T-cell (primary cell): ENCODE measurements at regions of chr5 and their contacts with region 1.

Region 1: GRCh38 chr5:98872674-98873073 is 56.1 kb downstream of the CHD1 start:
- DNase-seq: no peak
- ATAC-seq: no peak
- H3K4me3 ChIP-seq: no peak overlapping the region
- H3K4me3 Mint-ChIP-seq: no peak overlapping the region
- H3K27ac ChIP-seq: no peak overlapping the region
- H3K27ac Mint-ChIP-seq: no peak overlapping the region
- H3K4me1 ChIP-seq: no peaks in the 10 kb centered on the region
- H3K4me1 Mint-ChIP-seq: peaks cover under 1 to 8% (median 5%) of the 10 kb centered on the region in 3 donors
- H3K27me3 ChIP-seq: no peaks in the 10 kb centered on the region
- H3K27me3 Mint-ChIP-seq: no peaks in the 10 kb centered on the region

Region 2: DNA sequence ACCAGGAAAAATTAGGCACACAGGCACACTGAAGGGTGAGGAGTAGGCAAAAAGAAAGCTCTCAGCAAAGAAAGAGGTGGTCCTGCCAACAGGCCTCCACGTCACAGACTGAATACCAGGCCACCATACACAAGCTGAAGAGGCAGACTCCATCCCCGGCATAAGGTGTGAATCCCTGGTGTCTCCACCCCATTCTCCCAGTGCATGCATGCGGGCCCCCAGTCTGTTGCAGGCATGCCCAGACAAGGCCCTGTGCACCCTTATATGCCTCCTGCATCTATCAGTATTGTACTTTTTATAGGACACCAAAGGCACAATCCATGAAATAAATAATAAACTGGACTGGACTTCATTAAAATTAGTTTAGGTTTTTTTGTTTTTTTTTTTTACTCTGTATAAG is 26.2 kb before region 1 on chr5:
- CTCF ChIA-PET with region 1: no interaction called
- POLR2A ChIA-PET with region 1: interaction called in 1 of 2 experiments, 13 read pairs
- DNase-seq: no peak
- ATAC-seq: no peak
- H3K4me3 ChIP-seq: no peak overlapping the region
- H3K4me3 Mint-ChIP-seq: no peak overlapping the region
- H3K27ac ChIP-seq: no peak overlapping the region
- H3K27ac Mint-ChIP-seq: no peak overlapping the region
- H3K4me1 ChIP-seq: no peaks in the 10 kb centered on the region
- H3K4me1 Mint-ChIP-seq: no peaks in the 10 kb centered on the region
- H3K27me3 ChIP-seq: no peaks in the 10 kb centered on the region
- H3K27me3 Mint-ChIP-seq: no peaks in the 10 kb centered on the region

Region 3: GRCh38 chr5:99122976-99123375 is 250.3 kb after region 1 on chr5:
- CTCF ChIA-PET with region 1: no interaction called
- POLR2A ChIA-PET with region 1: no interaction called
- DNase-seq: no peak
- ATAC-seq: no peak
- H3K4me3 ChIP-seq: no peak overlapping the region
- H3K4me3 Mint-ChIP-seq: no peak overlapping the region
- H3K27ac ChIP-seq: no peak overlapping the region
- H3K27ac Mint-ChIP-seq: no peak overlapping the region
- H3K4me1 ChIP-seq: no peaks in the 10 kb centered on the region
- H3K4me1 Mint-ChIP-seq: no peaks in the 10 kb centered on the region
- H3K27me3 ChIP-seq: no peaks in the 10 kb centered on the region
- H3K27me3 Mint-ChIP-seq: peaks cover 3 to 5% of the 10 kb centered on the region in 2 donors